Activated T-helper 2 cell treated with anti-CD3 and anti-CD28 coated beads, Interferon-gamma antibody, Interleukin-2, Interleukin-4, amounts not matched to agents 10 μg/mL and 5 μg/mL and 100 μg/mL, durations not matched to agents 14 hours and 24 hours and 36 hours (primary cell): ENCODE measurements at regions of chr19 and their contacts with region 1.

Region 1: GRCh38 chr19:48506138-48506733 is 5.4 kb downstream of the LMTK3 start:
- DNase-seq: no peak
- H3K4me3 Mint-ChIP-seq: no peak overlapping the region
- H3K27ac Mint-ChIP-seq: no peak overlapping the region
- H3K4me1 Mint-ChIP-seq: peaks cover 15% of the 10 kb centered on the region
- H3K27me3 Mint-ChIP-seq: no peaks in the 10 kb centered on the region

Region 2: GRCh38 chr19:48558018-48558684 is 51.9 kb after region 1 on chr19:
- intact Hi-C with region 1: no loop called
- DNase-seq: no peak
- H3K4me3 Mint-ChIP-seq: no peak overlapping the region
- H3K27ac Mint-ChIP-seq: no peak overlapping the region
- H3K4me1 Mint-ChIP-seq: peaks cover 2% of the 10 kb centered on the region
- H3K27me3 Mint-ChIP-seq: peaks cover 1% of the 10 kb centered on the region

Region 3: GRCh38 chr19:48608798-48609263 is 102.6 kb after region 1 on chr19:
- intact Hi-C with region 1: loop called (anchors 2 kb)
- DNase-seq: peak; percentile 33
- H3K4me3 Mint-ChIP-seq: no peak overlapping the region
- H3K27ac Mint-ChIP-seq: no peak overlapping the region
- H3K4me1 Mint-ChIP-seq: peaks cover 2% of the 10 kb centered on the region
- H3K27me3 Mint-ChIP-seq: no peaks in the 10 kb centered on the region